ENCODE measurements at regions of chr22 and their contacts with region 1.

Region 1: GRCh38 chr22:20418211-20418788 is 19.3 kb downstream of the SCARF2 start:
- DNase-seq: peak; percentile 79
- H3K4me3 ChIP-seq: peak overlapping the region in 3 of 4 donors; percentile 4 to 53 (median 28)
- H3K27ac ChIP-seq: peak overlapping the region in 3 of 4 donors; percentile 29 to 46 (median 43)
- H3K4me1 ChIP-seq: peaks cover 0 to 13% (median 8%) of the 10 kb centered on the region in 4 donors
- H3K27me3 ChIP-seq: peaks cover 4% of the 10 kb centered on the region
- CTCF ChIP-seq: peak; percentile 83 to 91 (median 83)
- EP300 ChIP-seq: no peak
- POLR2A ChIP-seq: no peak

Region 2: GRCh38 chr22:20456064-20456721 is 37.9 kb after region 1 on chr22:
- in situ Hi-C with region 1: loop called in 1 of 4 experiments (anchors 5 kb)
- intact Hi-C with region 1: loop called (anchors 2 kb)
- DNase-seq: peak; percentile 65
- H3K4me3 ChIP-seq: no peak overlapping the region
- H3K27ac ChIP-seq: no peak overlapping the region
- H3K4me1 ChIP-seq: no peaks in the 10 kb centered on the region
- H3K27me3 ChIP-seq: no peaks in the 10 kb centered on the region
- CTCF ChIP-seq: peak; percentile 83 to 93 (median 87)
- EP300 ChIP-seq: no peak
- POLR2A ChIP-seq: no peak

Region 3: DNA sequence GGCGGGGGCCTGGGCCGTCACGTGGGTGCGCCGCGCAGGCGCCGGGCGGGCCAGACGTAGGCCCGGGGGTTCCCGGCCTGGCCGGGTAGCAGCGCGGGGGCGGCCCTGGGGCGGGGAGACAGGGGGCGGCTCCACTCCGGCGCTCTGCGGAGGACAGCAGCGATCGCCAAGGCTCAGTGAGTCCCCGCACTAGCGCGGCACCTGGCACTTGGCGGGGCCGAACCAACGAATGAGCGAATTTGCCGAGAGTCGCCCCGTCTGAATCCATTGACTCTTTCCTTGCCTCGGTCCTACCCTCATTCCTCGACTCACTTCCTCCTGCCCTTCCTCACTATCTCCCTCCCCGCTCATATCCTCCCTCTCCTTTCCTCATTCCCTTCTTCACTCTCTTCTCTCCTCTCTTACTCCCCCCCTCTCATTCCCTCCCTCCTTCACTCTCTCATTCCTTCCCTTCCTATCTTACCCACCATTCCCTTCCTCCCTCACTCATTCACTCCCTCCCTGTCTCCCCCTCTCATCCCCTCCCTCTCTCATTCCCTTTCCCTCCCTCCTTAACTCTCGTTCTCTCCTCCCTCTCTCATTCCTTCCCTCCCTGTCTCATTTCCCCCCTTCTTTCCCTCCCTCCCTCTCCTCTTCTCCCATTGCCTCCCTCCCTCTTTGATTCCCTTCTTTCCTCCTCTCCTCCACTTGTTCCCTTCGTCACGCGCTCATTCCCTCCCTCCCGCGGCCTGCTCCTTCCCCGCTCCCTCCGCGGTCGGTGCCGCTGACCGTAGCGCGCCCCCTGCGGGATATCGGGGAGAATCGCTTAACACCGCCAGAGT is 77.8 kb after region 1 on chr22:
- in situ Hi-C with region 1: no loop called
- intact Hi-C with region 1: loop called (anchors 2 kb)
- DNase-seq: peak; percentile 94
- H3K4me3 ChIP-seq: peak overlapping the region; percentile 61 to 71 (median 67)
- H3K27ac ChIP-seq: peak overlapping the region; percentile 96 to 98 (median 97)
- H3K4me1 ChIP-seq: peaks cover 6 to 41% (median 24%) of the 10 kb centered on the region in 4 donors
- H3K27me3 ChIP-seq: no peaks in the 10 kb centered on the region
- CTCF ChIP-seq: peak; percentile 85 to 95 (median 88)
- EP300 ChIP-seq: no peak
- POLR2A ChIP-seq: peak; percentile 87

Region 4: DNA sequence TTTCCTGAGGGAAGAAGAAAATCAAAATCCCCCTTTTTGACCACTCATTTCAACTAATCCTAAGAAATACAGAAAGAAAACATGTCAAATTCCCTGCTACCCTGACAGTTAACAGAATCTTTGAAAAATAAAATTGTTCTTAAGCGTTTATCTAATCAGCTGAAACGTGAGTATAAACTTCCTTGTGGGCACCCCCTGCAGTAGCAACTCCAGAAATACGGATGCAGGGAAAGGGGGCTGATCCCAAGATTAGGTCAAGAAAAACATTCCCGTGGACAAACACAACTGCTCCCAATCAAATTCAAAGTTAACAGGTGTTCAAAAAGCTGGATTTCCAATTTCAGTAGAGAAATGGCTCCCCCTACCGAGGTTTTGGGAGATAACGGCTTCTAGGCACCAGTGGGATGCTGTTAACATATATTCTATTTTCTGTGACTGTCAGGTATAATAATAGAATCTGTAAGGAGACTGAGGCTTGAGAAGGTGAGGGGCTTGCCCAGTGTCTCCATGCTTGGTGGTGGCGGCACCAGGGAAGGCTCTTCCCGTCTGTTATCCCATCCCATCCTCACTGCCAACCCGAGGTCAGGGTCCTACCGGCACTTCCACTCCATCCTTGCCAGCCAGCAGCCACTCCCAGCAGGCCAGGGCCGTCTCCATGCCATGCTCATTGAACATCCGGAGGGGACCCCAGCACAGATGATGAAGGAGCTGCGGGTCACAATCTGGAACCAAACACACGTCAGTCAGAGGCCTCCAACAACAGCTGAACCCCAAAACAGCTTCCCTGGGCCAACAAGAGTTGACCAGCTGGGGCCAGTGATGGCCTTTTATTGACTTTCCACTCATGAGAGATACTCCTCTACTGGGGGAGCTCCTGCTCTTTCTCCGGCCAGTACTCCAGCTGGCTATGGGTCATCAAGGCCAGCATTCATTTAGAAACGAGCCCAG is 323.6 kb after region 1 on chr22:
- in situ Hi-C with region 1: loop called in 1 of 4 experiments (anchors 25 kb)
- intact Hi-C with region 1: no loop called
- DNase-seq: peak; percentile 22
- H3K4me3 ChIP-seq: no peak overlapping the region
- H3K27ac ChIP-seq: no peak overlapping the region
- H3K4me1 ChIP-seq: no peaks in the 10 kb centered on the region
- H3K27me3 ChIP-seq: no peaks in the 10 kb centered on the region
- CTCF ChIP-seq: peak; percentile 49 to 58 (median 55)
- EP300 ChIP-seq: no peak
- POLR2A ChIP-seq: no peak

Measured in transverse colon (tissue), 4 donors.